Right ventricle myocardium inferior (tissue), 1 donor: ENCODE measurements at regions of chr6 and their contacts with region 1.

Region 1: GRCh38 chr6:165729307-165729936 is 66.4 kb upstream of the PDE10A start:
- DNase-seq: no peak
- ATAC-seq: no peak

Region 2: DNA sequence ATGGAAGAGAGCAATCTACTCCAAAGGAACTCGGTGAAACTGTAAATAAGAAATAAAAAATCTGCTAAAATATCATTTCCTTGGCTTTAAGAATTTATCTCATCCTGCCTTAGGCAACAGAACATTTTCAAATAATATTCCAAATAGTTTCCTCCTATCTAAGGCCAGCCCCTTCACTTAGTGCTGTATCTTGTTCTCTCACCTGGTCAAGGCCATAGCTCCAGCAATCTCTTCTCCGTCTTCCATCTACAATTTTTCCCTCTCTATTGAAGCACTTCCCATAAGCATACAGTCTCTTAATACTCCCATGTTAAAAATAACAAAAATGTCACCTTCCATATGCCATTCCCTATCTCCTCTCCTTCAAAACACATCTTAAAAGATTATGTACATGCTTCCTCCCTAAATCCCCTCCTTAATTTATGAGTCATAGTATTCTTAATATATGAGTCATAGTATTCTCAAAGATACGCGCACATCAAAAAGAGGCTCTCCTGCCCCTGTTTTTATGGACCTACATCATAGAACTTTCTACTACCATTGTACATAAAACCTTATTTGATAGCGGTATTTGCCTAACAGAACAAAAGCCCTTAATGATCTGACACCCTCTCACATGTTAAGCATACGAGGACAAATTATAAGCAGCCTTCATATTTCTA is 213.3 kb before region 1 on chr6:
- intact Hi-C with region 1: no loop called
- DNase-seq: no peak
- ATAC-seq: no peak

Region 3: DNA sequence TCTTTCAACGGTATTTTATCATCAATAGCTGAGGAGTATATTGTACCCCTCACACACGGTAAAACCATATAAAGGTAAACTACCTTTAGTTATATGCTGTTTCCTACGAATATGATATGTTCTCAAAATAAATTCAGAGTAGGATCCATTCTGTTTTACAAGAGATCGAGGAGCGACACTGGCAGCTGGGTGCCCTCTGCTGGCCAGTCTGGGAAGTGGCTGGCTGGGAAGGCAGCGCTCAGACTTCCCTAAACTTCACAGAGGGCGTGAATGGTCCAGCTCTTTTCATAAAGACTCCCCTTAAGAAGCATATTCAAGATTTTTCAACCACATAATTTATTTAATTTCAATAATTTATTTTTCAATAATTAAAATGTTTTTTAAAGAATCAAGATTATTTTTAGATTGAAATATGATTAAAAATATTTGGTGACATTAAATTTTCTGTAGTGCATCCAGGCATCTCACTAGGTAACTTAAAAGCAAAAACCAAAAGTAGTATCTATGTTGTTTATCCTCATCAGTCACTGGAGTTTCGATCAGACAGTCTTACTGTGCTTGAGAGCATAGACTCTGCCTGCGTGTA is 121.1 kb after region 1 on chr6:
- intact Hi-C with region 1: loop called (anchors 1 kb)
- DNase-seq: no peak
- ATAC-seq: peak; percentile 68